ENCODE measurements at regions of chr1 and their contacts with region 1.

Region 1: DNA sequence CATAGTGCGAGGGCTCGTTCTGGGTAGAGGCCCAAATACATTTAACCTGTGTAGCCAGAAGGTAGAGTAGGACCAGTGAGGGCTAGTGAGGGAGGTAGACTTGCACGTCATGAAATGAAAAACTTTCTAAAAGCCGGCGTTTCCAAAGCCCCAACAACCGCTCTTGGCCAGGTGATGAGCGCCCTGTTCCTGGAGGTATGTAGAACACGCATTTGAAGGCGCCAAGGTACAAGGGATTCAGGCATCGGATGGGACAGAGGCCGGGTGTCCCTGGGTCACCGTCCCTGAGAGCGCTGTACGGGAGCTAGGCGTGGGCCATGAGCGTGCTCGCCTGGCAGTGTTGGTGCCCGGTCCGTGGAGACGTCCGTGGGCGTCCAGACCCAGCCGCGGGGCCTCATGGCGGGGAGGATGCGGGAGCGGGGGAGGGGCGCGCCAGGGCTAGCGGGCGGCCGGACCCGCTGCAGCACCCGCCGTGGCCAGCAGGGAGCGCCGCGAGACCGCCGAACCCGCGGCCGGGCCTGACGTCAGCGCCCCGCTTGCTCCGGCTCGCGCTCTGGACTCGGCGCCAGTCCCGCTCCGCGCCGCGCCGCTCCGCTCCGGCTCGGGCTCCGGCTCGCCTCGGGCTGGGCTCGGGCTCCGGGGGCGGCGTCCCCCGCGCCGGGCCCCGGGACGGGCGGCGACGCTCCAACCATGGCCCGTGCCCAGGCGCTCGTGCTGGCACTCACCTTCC is at the start of gene PTPRU:
- DNase-seq: peak; percentile 74
- H3K4me3 ChIP-seq: peak within 1 kb of the TSS; percentile 56
- H3K27ac ChIP-seq: no peak within 1 kb of the TSS
- H3K4me1 ChIP-seq: peaks cover 6% of the 10 kb centered on the region
- H3K27me3 ChIP-seq: peaks cover 23% of the 10 kb centered on the region
- CTCF ChIP-seq: peak; percentile 62
- total RNA-seq, gene PTPRU: 2.3 to 4.8 TPM

Region 2: DNA sequence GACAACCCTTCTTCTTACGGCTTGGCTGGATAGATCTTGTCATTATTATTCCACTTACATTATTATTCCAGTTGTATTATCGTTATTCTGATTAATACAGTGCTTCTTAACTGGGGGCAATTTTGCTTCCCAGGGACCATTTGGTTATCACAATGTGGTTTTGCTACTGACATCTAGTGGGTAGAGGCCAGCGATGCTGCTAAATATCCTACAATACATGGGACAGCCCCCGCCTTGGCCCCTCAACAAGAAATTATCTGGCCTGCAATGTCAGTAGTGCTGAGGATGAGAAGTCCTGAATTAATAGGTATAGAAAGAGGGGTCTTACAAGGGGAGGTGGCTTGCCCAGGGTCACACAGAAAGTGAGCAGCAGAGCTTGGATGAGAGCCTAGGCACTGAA is 105.8 kb after region 1 on chr1:
- intact Hi-C with region 1: no loop called
- DNase-seq: no peak
- H3K4me3 ChIP-seq: no peak overlapping the region
- H3K27ac ChIP-seq: no peak overlapping the region
- H3K4me1 ChIP-seq: no peaks in the 10 kb centered on the region
- H3K27me3 ChIP-seq: no peaks in the 10 kb centered on the region
- CTCF ChIP-seq: no peak

Region 3: GRCh38 chr1:29849038-29849750 is 613.1 kb after region 1 on chr1:
- intact Hi-C with region 1: loop called (anchors 5 kb)
- DNase-seq: peak; percentile 52
- H3K4me3 ChIP-seq: no peak overlapping the region
- H3K27ac ChIP-seq: no peak overlapping the region
- H3K4me1 ChIP-seq: no peaks in the 10 kb centered on the region
- H3K27me3 ChIP-seq: no peaks in the 10 kb centered on the region
- CTCF ChIP-seq: peak; percentile 29

Region 4: DNA sequence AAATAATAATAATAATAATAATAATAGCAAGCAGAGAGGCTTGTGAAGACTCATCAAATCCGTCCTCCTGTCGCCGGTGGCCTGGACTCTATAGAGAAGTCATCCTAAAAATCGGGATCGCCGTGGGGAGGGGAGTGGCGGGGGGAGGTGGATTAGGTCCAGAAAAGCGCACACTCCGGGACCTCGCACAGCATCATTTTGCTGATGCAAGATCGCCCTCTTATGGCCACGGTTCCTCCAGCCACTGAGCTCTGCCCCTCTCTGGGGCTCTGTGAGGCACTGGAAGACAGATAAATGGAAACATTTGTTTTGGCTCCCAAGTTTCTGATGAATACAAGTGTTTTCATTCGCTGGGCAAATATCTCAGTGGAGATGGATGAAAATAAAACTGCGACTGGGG is 875.3 kb after region 1 on chr1:
- intact Hi-C with region 1: loop called (anchors 5 kb)
- DNase-seq: peak; percentile 57
- H3K4me3 ChIP-seq: no peak overlapping the region
- H3K27ac ChIP-seq: no peak overlapping the region
- H3K4me1 ChIP-seq: no peaks in the 10 kb centered on the region
- H3K27me3 ChIP-seq: peaks cover 4% of the 10 kb centered on the region
- CTCF ChIP-seq: peak; percentile 52

Region 5: DNA sequence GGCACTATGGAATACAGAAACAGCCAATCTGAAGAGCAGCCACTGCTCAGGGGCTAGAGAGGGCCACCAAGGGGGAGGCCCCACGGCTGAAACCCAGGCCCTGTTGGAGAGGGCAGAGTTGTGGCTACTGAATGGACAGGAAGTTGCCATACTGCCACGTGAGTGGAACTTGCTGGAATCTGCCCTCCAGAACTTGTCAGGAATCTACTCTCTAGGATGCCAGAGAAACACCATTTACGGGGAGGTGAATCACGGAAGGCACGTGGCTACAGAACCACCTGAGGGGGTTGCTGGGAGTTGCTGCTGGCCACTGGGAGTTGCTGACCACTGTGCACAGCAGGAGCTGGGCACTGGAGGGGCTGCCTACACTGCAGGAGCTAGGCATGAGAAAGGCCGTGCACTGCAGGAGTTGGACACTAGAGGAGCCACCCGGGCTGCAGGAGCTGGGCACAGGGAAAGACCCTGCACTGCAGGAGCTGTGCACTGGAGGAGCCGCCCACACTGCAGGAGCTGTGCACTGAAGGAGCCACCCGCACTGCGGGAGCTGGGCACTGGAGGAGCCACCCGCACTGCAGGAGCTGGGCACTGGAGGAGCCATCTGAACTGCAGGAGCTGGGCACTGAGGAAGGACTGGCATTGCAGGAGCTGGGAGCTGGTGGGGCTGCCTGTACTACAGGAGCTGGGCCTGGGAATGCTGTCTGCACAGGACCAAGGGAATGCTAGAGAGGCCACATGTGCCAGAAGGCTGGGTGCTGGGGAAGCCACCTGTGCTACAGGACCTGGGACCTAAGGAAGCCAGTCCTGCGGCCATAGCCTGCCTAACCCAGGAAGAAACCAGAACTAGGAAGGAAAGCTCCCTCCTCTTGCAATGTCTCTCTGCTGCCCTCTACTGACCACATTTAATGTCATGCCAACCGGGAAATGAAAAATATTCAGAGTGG is 1143.8 kb after region 1 on chr1:
- intact Hi-C with region 1: loop called (anchors 5 kb)
- DNase-seq: peak; percentile 70
- H3K4me3 ChIP-seq: no peak overlapping the region
- H3K27ac ChIP-seq: no peak overlapping the region
- H3K4me1 ChIP-seq: no peaks in the 10 kb centered on the region
- H3K27me3 ChIP-seq: no peaks in the 10 kb centered on the region
- CTCF ChIP-seq: peak; percentile 74

Region 6: GRCh38 chr1:30707412-30708360 is 1471.6 kb after region 1 on chr1:
- intact Hi-C with region 1: loop called (anchors 5 kb)
- DNase-seq: peak; percentile 76
- H3K4me3 ChIP-seq: no peak overlapping the region
- H3K27ac ChIP-seq: no peak overlapping the region
- H3K4me1 ChIP-seq: no peaks in the 10 kb centered on the region
- H3K27me3 ChIP-seq: no peaks in the 10 kb centered on the region
- CTCF ChIP-seq: peak; percentile 72

Measured in colonic mucosa (tissue), 4 donors.